Left ventricle myocardium superior (tissue), 1 donor: ENCODE measurements at regions of chr9 and their contacts with region 1.

Region 1: GRCh38 chr9:72871685-72872084 is 81.2 kb downstream of the ALDH1A1 start:
- DNase-seq: no peak
- ATAC-seq: no peak

Region 2: GRCh38 chr9:73081979-73082657 is 210.4 kb after region 1 on chr9:
- intact Hi-C with region 1: loop called (anchors 5 kb)
- DNase-seq: no peak
- ATAC-seq: peak; percentile 56